Activated CD4-positive, alpha-beta T cell treated with anti-CD3 and anti-CD28 coated beads, Interleukin-2, amount 10 ng/mL, durations not matched to agents 7 days and 5 days (primary cell): ENCODE measurements at regions of chr1 and their contacts with region 1.

Region 1: DNA sequence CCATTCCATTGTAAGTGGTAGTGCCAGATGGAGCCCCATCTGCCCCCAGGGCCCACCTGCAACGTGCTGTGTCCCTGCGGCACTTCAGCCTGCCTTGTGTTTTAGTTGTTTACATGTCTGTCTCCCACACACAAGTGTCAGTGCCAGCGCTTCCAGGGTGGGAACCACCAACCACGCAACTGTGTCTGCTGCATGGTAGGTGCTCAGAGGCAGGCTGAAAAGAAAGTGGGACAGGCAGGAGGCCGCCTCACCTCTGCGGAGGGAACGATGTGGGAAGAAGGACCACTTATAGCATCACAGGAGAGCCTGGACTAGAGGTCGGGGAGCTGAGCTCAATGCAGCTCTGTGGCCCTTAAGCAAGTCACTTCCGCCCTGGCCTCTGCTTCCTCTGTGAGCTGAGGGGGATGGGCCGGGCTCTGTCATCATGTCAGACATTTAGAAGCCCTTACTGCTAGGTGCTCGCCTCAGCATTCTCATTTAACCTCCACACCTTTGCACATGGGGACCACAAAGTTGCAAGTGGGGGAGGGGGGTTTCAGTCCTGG is 17.9 kb downstream of the SLC9A1 start:
- DNase-seq: peak; percentile 89
- H3K4me3 Mint-ChIP-seq: peak overlapping the region; percentile 79
- H3K27ac Mint-ChIP-seq: peak overlapping the region; percentile 100
- H3K4me1 Mint-ChIP-seq: peaks cover 56% of the 10 kb centered on the region
- H3K27me3 Mint-ChIP-seq: no peaks in the 10 kb centered on the region

Region 2: GRCh38 chr1:27154991-27155781 is 18.1 kb after region 1 on chr1 and contains the start of gene SLC9A1:
- CTCF ChIA-PET with region 1: interaction called, 76 read pairs
- POLR2A ChIA-PET with region 1: interaction called, 3 read pairs
- DNase-seq: peak; percentile 91
- H3K4me3 Mint-ChIP-seq: peak within 1 kb of the TSS; percentile 88
- H3K27ac Mint-ChIP-seq: peak within 1 kb of the TSS; percentile 100
- H3K4me1 Mint-ChIP-seq: peaks cover 45% of the 10 kb centered on the region
- H3K27me3 Mint-ChIP-seq: no peaks in the 10 kb centered on the region
- total RNA-seq, gene SLC9A1: 24.8 to 32.4 TPM